Endothelial cell of umbilical vein (primary cell): ENCODE measurements at regions of chr5 and their contacts with region 1.

Region 1: GRCh38 chr5:121304831-121305230 is 546.9 kb upstream of the FTMT start:
- DNase-seq: no peak
- H3K4me3 ChIP-seq: no peak overlapping the region
- H3K27ac ChIP-seq: no peak overlapping the region
- H3K4me1 ChIP-seq: no peaks in the 10 kb centered on the region
- H3K27me3 ChIP-seq: no peaks in the 10 kb centered on the region
- CTCF ChIP-seq: no peak
- POLR2A ChIP-seq: no peak

Region 2: GRCh38 chr5:121251954-121252353 is 52.9 kb before region 1 on chr5:
- CTCF ChIA-PET with region 1: no interaction called
- POLR2A ChIA-PET with region 1: no interaction called
- dilution Hi-C with region 1: no loop called
- intact Hi-C with region 1: no loop called
- DNase-seq: peak; percentile 83
- H3K4me3 ChIP-seq: no peak overlapping the region
- H3K27ac ChIP-seq: peak overlapping the region; percentile 85
- H3K4me1 ChIP-seq: peaks cover 18% of the 10 kb centered on the region
- H3K27me3 ChIP-seq: no peaks in the 10 kb centered on the region
- CTCF ChIP-seq: no peak
- POLR2A ChIP-seq: no peak

Region 3: DNA sequence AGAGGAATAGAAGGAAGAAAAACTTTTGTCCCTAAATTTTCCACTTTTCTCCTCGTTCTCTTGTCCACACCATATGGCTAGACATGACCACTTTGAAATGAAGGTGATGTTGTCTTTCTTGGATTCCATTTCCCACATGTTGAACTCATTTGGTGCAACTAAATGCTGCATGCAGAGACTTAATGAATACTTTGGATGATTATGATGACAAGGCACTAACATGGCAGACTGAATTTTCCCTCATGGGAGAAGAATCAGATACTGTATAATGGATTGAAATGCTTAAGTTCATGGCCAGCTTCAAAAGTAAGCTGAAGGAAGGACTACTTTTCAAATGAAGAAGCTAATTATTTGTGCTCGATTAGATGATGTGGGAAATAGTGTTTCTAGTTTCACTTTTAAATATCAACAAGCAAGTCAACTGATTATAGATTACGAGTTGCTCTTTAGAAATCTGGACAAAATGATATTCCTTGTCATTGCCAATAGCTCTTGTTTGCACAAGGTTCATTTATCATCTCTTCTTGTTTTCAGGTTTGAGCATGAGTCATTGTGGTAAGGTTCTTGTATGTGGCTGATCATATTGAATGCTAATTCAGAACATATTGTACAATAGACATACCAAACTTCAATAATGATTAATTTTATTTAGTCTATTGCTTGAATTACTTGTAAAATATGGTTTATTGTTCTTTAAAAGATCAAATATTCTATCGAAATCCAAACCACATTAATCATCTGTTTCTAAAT is 45.5 kb after region 1 on chr5:
- CTCF ChIA-PET with region 1: no interaction called
- POLR2A ChIA-PET with region 1: no interaction called
- dilution Hi-C with region 1: no loop called
- intact Hi-C with region 1: loop called (anchors 5 kb)
- DNase-seq: no peak
- H3K4me3 ChIP-seq: no peak overlapping the region
- H3K27ac ChIP-seq: no peak overlapping the region
- H3K4me1 ChIP-seq: no peaks in the 10 kb centered on the region
- H3K27me3 ChIP-seq: no peaks in the 10 kb centered on the region
- CTCF ChIP-seq: no peak
- POLR2A ChIP-seq: no peak